Colonic mucosa (tissue), 4 donors: ENCODE measurements at regions of chr1 and their contacts with region 1.

Region 1: GRCh38 chr1:87292684-87293493 is 35.8 kb upstream of the LMO4 start:
- DNase-seq: peak; percentile 66
- H3K4me3 ChIP-seq: no peak overlapping the region
- H3K27ac ChIP-seq: no peak overlapping the region
- H3K4me1 ChIP-seq: no peaks in the 10 kb centered on the region
- H3K27me3 ChIP-seq: no peaks in the 10 kb centered on the region
- CTCF ChIP-seq: peak; percentile 64

Region 2: GRCh38 chr1:86993269-86993985 is 299.5 kb before region 1 on chr1:
- intact Hi-C with region 1: no loop called
- DNase-seq: no peak
- H3K4me3 ChIP-seq: no peak overlapping the region
- H3K27ac ChIP-seq: no peak overlapping the region
- H3K4me1 ChIP-seq: no peaks in the 10 kb centered on the region
- H3K27me3 ChIP-seq: no peaks in the 10 kb centered on the region
- CTCF ChIP-seq: no peak

Region 3: GRCh38 chr1:87362834-87363426 is 70.0 kb after region 1 on chr1:
- intact Hi-C with region 1: no loop called
- DNase-seq: no peak
- H3K4me3 ChIP-seq: no peak overlapping the region
- H3K27ac ChIP-seq: no peak overlapping the region
- H3K4me1 ChIP-seq: no peaks in the 10 kb centered on the region
- H3K27me3 ChIP-seq: no peaks in the 10 kb centered on the region
- CTCF ChIP-seq: no peak

Region 4: GRCh38 chr1:87953732-87954344 is 660.9 kb after region 1 on chr1:
- intact Hi-C with region 1: loop called (anchors 10 kb)
- DNase-seq: peak; percentile 73
- H3K4me3 ChIP-seq: no peak overlapping the region
- H3K27ac ChIP-seq: no peak overlapping the region
- H3K4me1 ChIP-seq: no peaks in the 10 kb centered on the region
- H3K27me3 ChIP-seq: no peaks in the 10 kb centered on the region
- CTCF ChIP-seq: peak; percentile 79

Region 5: DNA sequence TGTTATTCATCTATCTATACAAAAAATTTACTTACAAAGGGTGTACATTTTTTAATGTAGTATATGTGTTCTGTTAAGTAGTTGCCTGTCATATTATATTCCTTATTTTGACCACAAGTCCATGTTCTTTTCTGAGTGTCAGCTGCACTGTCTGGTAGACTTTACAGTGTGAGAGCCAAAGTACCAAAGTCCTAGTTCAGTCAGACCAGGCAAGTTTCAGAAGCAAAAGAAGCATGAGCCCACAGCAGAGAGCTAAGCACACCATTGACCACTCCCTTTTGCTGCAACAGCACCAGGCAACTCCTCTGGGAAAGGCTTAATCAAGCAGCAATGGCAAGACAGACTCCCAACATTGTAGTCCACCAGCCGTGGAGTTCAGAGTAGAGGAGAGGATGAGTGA is 759.3 kb after region 1 on chr1:
- intact Hi-C with region 1: loop called (anchors 10 kb)
- DNase-seq: no peak
- H3K4me3 ChIP-seq: no peak overlapping the region
- H3K27ac ChIP-seq: no peak overlapping the region
- H3K4me1 ChIP-seq: no peaks in the 10 kb centered on the region
- H3K27me3 ChIP-seq: no peaks in the 10 kb centered on the region
- CTCF ChIP-seq: no peak

Region 6: DNA sequence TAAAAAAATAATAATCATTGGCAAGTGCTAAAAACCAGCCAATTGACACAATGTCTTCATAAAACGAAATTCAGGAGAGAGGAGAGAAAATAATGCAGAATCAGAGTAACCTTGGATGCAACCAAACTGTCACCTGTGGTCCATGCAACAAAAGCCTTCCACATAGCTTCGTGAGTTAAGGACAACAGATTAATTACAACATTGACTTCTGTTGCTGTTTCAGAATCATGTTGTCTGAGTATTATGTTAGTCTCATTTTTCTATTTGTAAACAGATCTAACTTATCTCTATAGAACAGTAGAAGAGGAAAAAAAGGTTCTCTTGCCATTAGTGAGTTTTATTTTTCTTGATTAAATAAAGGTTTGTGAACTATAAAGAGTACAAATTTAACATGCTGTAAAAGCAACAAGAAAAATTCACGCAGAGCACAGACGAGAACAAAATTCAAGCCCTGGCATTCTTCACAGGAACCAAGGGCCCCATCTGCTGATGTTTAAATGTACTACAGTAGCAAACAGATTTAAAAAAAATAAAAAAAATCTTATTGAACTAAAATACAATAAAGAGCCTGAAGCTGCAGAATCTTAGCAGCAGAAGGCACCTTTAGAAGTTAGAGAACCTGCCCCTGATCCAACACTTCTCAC is 1010.1 kb after region 1 on chr1:
- intact Hi-C with region 1: loop called (anchors 5 kb)
- DNase-seq: no peak
- H3K4me3 ChIP-seq: no peak overlapping the region
- H3K27ac ChIP-seq: no peak overlapping the region
- H3K4me1 ChIP-seq: no peaks in the 10 kb centered on the region
- H3K27me3 ChIP-seq: no peaks in the 10 kb centered on the region
- CTCF ChIP-seq: peak; percentile 25